ENCODE measurements at regions of chr9 and their contacts with region 1.

Region 1: DNA sequence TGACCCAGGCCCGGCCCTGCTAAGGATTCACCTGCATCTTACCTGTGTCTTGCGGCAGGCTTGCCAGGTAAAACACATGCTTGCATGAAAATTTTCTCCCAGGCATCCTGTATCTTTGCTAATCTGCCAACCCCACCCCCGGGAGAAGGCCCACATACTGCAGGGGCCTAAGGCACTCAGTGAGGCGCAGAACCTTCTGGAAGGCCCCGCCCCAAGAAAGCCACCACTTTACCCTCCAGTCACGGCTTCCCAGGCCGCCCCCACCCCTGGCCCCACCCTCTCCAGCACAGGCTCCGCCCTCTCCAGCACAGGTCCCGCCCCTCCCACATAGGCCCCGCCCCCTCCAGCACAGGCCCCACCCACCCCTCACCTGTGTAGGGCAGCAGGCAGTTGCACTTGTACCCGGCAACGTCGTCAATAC is 29.8 kb upstream of the SEC16A start:
- DNase-seq: no peak
- ATAC-seq: peak; percentile 76
- H3K4me3 ChIP-seq: no peak overlapping the region
- H3K4me3 Mint-ChIP-seq: no peak overlapping the region
- H3K27ac ChIP-seq: no peak overlapping the region
- H3K27ac Mint-ChIP-seq: no peak overlapping the region
- H3K4me1 ChIP-seq: no peaks in the 10 kb centered on the region
- H3K4me1 Mint-ChIP-seq: no peaks in the 10 kb centered on the region
- H3K27me3 ChIP-seq: no peaks in the 10 kb centered on the region
- H3K27me3 Mint-ChIP-seq: no peaks in the 10 kb centered on the region

Region 2: GRCh38 chr9:136533775-136534157 is 21.1 kb after region 1 on chr9:
- CTCF ChIA-PET with region 1: no interaction called
- POLR2A ChIA-PET with region 1: interaction called, 4 read pairs
- intact Hi-C with region 1: loop called in 1 of 2 experiments (anchors 2 kb)
- DNase-seq: peak; percentile 22 to 79 (median 40)
- ATAC-seq: peak; percentile 76
- H3K4me3 ChIP-seq: peak overlapping the region; percentile 62
- H3K4me3 Mint-ChIP-seq: peak overlapping the region; percentile 69 to 83 (median 78)
- H3K27ac ChIP-seq: peak overlapping the region; percentile 72
- H3K27ac Mint-ChIP-seq: peak overlapping the region; percentile 72 to 93 (median 91)
- H3K4me1 ChIP-seq: peaks cover 66 to 86% of the 10 kb centered on the region in 2 donors
- H3K4me1 Mint-ChIP-seq: peaks cover 27 to 75% (median 43%) of the 10 kb centered on the region in 7 donors
- H3K27me3 ChIP-seq: no peaks in the 10 kb centered on the region
- H3K27me3 Mint-ChIP-seq: no peaks in the 10 kb centered on the region